Heart left ventricle (tissue), 16 donors: ENCODE measurements at regions of chr1 and their contacts with region 1.

Region 1: GRCh38 chr1:19341201-19342072 is 29.3 kb downstream of the SLC66A1 start:
- DNase-seq: peak; percentile 51 to 80 (median 65)
- ATAC-seq: peak in 3 of 4 donors; percentile 42 to 61 (median 52)
- H3K4me3 ChIP-seq: no peak overlapping the region
- H3K27ac ChIP-seq: peak overlapping the region in 6 of 12 donors; percentile 20 to 52 (median 34)
- H3K4me1 ChIP-seq: peaks cover 0 to 27% (median 9%) of the 10 kb centered on the region in 12 donors
- H3K27me3 ChIP-seq: no peaks in the 10 kb centered on the region
- CTCF ChIP-seq: peak; percentile 73 to 95 (median 86)
- POLR2A ChIP-seq: no peak

Region 2: GRCh38 chr1:18778437-18778836 is 563.0 kb before region 1 on chr1:
- intact Hi-C with region 1: no loop called
- DNase-seq: no peak
- ATAC-seq: no peak
- H3K4me3 ChIP-seq: no peak overlapping the region
- H3K27ac ChIP-seq: no peak overlapping the region
- H3K4me1 ChIP-seq: no peaks in the 10 kb centered on the region
- H3K27me3 ChIP-seq: peaks cover 0 to 75% (median 16%) of the 10 kb centered on the region in 9 donors
- CTCF ChIP-seq: no peak
- POLR2A ChIP-seq: no peak

Region 3: GRCh38 chr1:19311959-19312781 is 29.3 kb before region 1 on chr1 and contains the starts of genes AKR7A2 and SLC66A1:
- intact Hi-C with region 1: no loop called
- DNase-seq: peak; percentile 92 to 97 (median 95)
- ATAC-seq: peak; percentile 95 to 97 (median 96)
- H3K4me3 ChIP-seq: peak within 1 kb of the TSS; percentile 59 to 97 (median 90)
- H3K27ac ChIP-seq: peak within 1 kb of the TSS; percentile 56 to 95 (median 92)
- H3K4me1 ChIP-seq: peaks cover 0 to 35% (median 20%) of the 10 kb centered on the region in 12 donors
- H3K27me3 ChIP-seq: no peaks in the 10 kb centered on the region
- CTCF ChIP-seq: peak in 4 of 12 donors; percentile 3 to 21 (median 13)
- POLR2A ChIP-seq: peak in 1 of 2 donors; percentile 79
- total RNA-seq, gene AKR7A2: 25.0 to 97.5 (median 46.4) TPM
- total RNA-seq, gene SLC66A1: 6.4 to 17.2 (median 8.2) TPM

Region 4: GRCh38 chr1:19385869-19386591 is 44.6 kb after region 1 on chr1:
- intact Hi-C with region 1: loop called in 1 of 10 experiments (anchors 5 kb)
- DNase-seq: peak in 4 of 5 donors; percentile 67 to 81 (median 72)
- ATAC-seq: peak; percentile 71 to 82 (median 77)
- H3K4me3 ChIP-seq: peak overlapping the region in 1 of 12 donors; percentile 22
- H3K27ac ChIP-seq: peak overlapping the region in 9 of 12 donors; percentile 15 to 64 (median 37)
- H3K4me1 ChIP-seq: peaks cover 10 to 66% (median 47%) of the 10 kb centered on the region in 12 donors
- H3K27me3 ChIP-seq: no peaks in the 10 kb centered on the region
- CTCF ChIP-seq: no peak
- POLR2A ChIP-seq: no peak

Region 5: DNA sequence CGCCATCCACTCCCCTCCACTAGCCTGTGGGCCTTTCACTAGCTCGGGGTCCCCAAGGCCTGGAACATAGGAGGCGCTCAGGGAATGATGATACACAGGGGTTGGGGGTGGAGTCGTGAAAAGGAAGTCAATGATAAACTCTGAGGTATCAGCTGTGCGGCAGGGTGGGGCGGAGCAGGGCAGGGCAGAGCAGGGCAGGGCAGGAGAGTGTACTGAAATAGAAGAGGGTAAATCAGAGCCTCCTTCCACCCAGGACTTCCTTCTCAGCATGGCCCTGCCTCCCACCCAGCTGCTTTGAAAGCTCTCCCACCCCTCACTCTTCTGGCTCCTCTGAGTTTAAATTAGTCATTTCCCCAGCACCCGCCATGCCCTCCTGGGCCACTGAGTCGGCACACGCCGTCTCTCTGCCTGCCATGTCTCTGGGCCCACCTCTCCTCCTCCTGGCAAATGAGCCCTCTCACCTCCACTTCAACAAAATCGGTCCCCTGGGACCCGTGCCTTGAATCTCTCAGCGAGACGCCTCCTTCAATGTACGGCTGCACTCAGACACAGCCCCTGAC is 127.0 kb after region 1 on chr1:
- intact Hi-C with region 1: no loop called
- DNase-seq: peak in 3 of 5 donors; percentile 39 to 59 (median 48)
- ATAC-seq: peak; percentile 21 to 70 (median 62)
- H3K4me3 ChIP-seq: peak overlapping the region in 1 of 12 donors; percentile 23
- H3K27ac ChIP-seq: peak overlapping the region in 10 of 12 donors; percentile 52 to 92 (median 62)
- H3K4me1 ChIP-seq: peaks cover 9 to 96% (median 64%) of the 10 kb centered on the region in 12 donors
- H3K27me3 ChIP-seq: no peaks in the 10 kb centered on the region
- CTCF ChIP-seq: no peak
- POLR2A ChIP-seq: no peak

Region 6: GRCh38 chr1:19582302-19582701 is 240.9 kb after region 1 on chr1:
- intact Hi-C with region 1: loop called in 1 of 10 experiments (anchors 5 kb)
- DNase-seq: peak in 4 of 5 donors; percentile 31 to 77 (median 40)
- ATAC-seq: peak in 2 of 4 donors; percentile 62 to 65
- H3K4me3 ChIP-seq: no peak overlapping the region
- H3K27ac ChIP-seq: no peak overlapping the region
- H3K4me1 ChIP-seq: peaks cover 0 to 9% (median 0%) of the 10 kb centered on the region in 12 donors
- H3K27me3 ChIP-seq: no peaks in the 10 kb centered on the region
- CTCF ChIP-seq: peak; percentile 37 to 71 (median 56)
- POLR2A ChIP-seq: no peak